PC-9 (cell line): ENCODE measurements at regions of chr9 and their contacts with region 1.

Region 1: GRCh38 chr9:128863647-128864046 is 18.1 kb downstream of the KYAT1 start:
- DNase-seq: peak; percentile 70 to 85
- H3K4me3 ChIP-seq: no peak overlapping the region
- H3K27ac ChIP-seq: no peak overlapping the region
- H3K4me1 ChIP-seq: peaks cover 37% of the 10 kb centered on the region
- H3K27me3 ChIP-seq: no peaks in the 10 kb centered on the region
- CTCF ChIP-seq: peak; percentile 96

Region 2: GRCh38 chr9:128881901-128882681 is 18.4 kb after region 1 on chr9 and contains the starts of genes KYAT1 and LRRC8A:
- CTCF ChIA-PET with region 1: interaction called, 8 read pairs
- POLR2A ChIA-PET with region 1: no interaction called
- intact Hi-C with region 1: loop called (anchors 1 kb)
- DNase-seq: peak; percentile 89 to 99
- H3K4me3 ChIP-seq: peak within 1 kb of the TSS; percentile 87
- H3K27ac ChIP-seq: peak within 1 kb of the TSS; percentile 77
- H3K4me1 ChIP-seq: peaks cover 20% of the 10 kb centered on the region
- H3K27me3 ChIP-seq: no peaks in the 10 kb centered on the region
- CTCF ChIP-seq: no peak
- total RNA-seq, gene KYAT1: 26.1 and 27.6 TPM in 2 replicates
- total RNA-seq, gene LRRC8A: 90.3 and 95.7 TPM in 2 replicates

Region 3: DNA sequence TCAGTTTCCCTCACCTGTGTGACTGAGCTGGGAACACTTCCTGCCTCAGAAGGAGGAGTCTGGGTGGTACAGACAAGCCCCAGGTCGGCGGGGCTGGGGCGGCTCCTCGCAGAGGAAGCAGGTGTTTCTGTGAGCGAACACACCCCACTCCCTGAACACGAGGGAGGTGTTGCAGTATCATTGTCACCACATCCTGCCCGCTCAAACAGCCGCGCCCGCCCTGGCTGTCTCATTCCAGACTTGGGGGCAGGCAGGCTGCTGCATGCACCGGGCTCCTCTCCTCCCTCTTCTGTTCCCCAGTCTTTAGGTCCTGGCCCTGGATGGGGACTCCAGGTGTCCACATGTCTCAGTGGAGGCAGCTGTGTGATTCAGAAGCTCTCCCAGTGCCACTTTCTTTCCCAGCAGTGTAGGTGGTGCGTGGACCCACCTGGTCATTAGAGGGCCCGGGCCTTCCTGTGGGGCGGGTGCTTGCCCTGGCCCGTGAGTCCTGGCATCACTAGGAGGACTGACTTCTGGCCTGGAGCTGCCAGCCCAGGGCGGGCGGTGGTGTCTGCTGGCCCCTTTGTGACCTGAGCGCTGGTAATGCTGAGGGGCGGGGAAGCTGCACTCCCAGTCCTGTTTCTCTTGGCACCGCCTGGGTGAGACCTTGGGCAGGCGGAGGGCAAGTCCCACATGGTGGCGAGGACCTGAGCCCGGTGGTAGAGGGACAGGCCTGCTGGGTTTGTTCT is 38.9 kb after region 1 on chr9:
- CTCF ChIA-PET with region 1: no interaction called
- POLR2A ChIA-PET with region 1: interaction called, 6 read pairs
- intact Hi-C with region 1: loop called (anchors 1 kb)
- DNase-seq: peak; percentile 62 to 93
- H3K4me3 ChIP-seq: no peak overlapping the region; the same call in 1 of the 2 replicates
- H3K27ac ChIP-seq: peak overlapping the region; percentile 88
- H3K4me1 ChIP-seq: peaks cover 67% of the 10 kb centered on the region
- H3K27me3 ChIP-seq: no peaks in the 10 kb centered on the region
- CTCF ChIP-seq: no peak

Region 4: DNA sequence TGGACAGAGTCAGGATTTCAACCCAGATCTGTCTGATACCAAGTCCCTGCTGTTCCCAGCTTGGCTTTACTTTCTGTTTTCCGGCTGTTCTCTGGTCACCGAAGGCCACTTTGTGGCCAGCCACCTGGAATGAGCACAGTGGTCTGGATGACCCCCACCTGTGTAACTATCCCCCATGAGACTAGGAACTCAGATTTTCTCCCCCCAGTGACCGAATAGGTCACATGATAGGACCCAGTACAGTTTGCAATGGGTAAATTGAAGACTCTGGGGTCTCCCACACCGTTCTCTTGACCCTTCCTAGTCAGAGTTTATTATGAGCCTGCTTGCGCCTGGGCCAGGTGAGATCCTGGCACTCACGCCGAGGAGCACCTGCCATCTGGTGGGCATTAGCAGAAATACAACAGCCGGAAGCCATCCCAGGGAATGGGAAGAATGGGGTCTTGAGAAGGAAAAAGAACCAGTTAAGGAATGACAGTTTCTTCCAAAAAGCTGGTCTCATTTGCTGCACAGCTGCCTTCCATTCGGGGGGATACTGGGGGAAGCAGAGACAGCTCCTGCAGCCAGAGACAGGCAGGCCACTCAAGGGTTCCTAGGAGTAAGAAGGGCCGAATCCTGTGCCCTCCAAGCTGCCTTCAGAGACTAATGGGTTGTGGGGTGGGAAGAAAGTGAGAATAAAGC is 64.2 kb after region 1 on chr9:
- CTCF ChIA-PET with region 1: interaction called, 6 read pairs
- POLR2A ChIA-PET with region 1: no interaction called
- intact Hi-C with region 1: loop called (anchors 1 kb)
- DNase-seq: peak in 1 of 2 experiments; percentile 70
- H3K4me3 ChIP-seq: no peak overlapping the region
- H3K27ac ChIP-seq: no peak overlapping the region
- H3K4me1 ChIP-seq: no peaks in the 10 kb centered on the region
- H3K27me3 ChIP-seq: no peaks in the 10 kb centered on the region
- CTCF ChIP-seq: peak; percentile 95

Region 5: DNA sequence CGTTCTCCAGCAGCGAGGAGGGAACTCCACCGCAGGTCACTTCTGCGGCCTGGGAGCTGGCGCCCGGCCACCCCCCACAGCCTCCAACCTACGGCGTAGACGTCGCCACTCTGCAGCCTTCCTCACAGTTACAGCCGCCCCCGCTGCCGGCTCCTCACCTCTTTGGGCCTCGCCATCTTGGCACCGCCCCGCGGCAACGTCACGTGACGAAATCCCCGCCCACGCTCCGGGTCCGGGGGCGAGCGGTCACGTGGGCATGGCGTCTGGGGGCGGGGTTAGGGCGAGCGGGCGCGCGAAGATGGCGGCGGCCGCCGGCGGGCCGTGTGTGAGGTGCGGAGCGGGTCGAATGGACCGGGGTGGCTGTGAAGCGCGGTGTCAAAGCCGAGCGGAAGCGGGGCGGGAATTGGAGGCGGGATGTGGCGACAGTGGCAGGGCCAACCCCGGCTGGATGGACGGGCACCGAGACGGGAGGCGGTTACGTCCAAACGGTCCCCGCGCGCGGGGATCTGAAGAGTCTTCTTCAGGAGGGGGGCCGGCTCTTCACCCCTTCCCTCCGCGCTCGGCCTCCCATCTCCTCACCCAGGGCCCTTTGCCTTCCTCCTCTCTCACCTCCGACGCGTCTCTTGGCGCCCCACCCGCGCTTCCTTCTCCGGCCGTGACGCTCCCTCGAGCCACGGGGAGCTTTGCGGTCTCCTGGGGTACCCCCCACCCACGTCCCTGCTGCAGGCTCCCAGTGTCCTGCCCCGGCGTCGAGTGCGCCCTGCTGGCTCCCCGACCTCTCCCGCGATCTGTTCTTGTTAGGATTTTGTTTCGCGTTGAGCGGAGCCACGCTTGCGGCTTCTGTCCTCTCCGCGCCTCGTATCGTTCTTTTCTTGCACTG is 84.0 kb after region 1 on chr9 and contains the starts of genes DOLK and NUP188:
- CTCF ChIA-PET with region 1: no interaction called
- POLR2A ChIA-PET with region 1: no interaction called
- intact Hi-C with region 1: loop called (anchors 5 kb)
- DNase-seq: peak; percentile 80 to 98
- H3K4me3 ChIP-seq: peak within 1 kb of the TSS; percentile 96
- H3K27ac ChIP-seq: peak within 1 kb of the TSS; percentile 61
- H3K4me1 ChIP-seq: peaks cover 6% of the 10 kb centered on the region; the same call in 1 of the 2 replicates
- H3K27me3 ChIP-seq: no peaks in the 10 kb centered on the region
- CTCF ChIP-seq: no peak
- total RNA-seq, gene DOLK: 18.0 and 19.0 TPM in 2 replicates
- total RNA-seq, gene NUP188: 59.7 and 90.0 TPM in 2 replicates